ENCODE measurements at regions of chr1 and their contacts with region 1.

Region 1: GRCh38 chr1:162391790-162392563 is 10.4 kb downstream of the C1orf226 start:
- DNase-seq: no peak
- ATAC-seq: peak; percentile 43

Region 2: GRCh38 chr1:162056043-162056442 is 335.9 kb before region 1 on chr1:
- intact Hi-C with region 1: loop called (anchors 5 kb)
- DNase-seq: peak; percentile 77
- ATAC-seq: peak; percentile 95

Region 3: DNA sequence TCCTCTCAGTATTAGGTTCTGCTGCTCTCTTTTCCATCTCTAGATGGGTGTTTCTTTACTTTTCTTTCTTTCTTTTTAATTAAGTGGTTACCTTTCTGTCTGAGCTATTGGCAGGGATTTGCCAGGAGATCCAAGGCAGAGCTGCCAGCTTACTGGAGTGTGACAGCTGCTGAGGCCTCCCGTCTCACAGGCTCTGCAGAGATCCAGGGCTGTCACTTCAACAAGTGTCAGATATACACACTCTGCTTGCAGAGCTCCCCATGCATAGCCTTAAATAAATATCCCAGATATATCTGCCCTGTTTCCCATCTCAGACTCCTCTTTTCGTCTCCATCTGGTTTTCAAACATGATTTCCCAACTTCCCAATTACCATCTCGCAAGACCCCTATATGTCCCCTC is 198.2 kb before region 1 on chr1:
- intact Hi-C with region 1: no loop called
- DNase-seq: no peak
- ATAC-seq: no peak

Region 4: DNA sequence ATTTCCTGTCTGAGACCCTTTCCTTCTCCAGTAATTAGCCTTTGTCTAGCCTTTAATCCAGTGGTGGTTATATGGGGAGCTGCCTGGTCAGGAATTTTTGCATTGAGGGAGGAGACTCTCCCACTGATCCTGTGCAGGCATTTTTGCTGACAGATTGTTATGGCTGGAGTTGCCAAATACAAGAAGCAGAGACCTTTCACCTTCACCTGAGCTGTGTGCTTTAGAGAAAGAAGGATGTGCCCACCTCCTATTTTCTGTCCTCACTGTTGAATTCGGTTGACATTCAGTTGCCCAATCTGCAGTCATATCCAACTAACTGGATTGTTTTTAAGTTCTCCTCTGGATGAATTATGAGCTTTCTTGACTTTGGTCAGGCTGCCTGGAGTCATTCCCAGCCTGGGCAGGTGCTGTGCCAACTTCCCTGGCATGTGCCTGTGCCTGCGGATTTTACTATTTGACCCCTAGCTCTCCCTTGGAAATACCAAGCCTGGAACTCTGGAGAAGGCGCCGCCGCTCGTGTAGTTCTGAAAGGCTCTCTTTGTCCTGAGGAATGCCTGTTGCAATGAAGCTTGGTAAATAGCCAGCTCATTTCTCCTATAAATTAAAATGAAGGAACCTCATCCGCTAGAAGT is 178.6 kb before region 1 on chr1:
- intact Hi-C with region 1: no loop called
- DNase-seq: peak; percentile 76
- ATAC-seq: peak; percentile 89

Region 5: DNA sequence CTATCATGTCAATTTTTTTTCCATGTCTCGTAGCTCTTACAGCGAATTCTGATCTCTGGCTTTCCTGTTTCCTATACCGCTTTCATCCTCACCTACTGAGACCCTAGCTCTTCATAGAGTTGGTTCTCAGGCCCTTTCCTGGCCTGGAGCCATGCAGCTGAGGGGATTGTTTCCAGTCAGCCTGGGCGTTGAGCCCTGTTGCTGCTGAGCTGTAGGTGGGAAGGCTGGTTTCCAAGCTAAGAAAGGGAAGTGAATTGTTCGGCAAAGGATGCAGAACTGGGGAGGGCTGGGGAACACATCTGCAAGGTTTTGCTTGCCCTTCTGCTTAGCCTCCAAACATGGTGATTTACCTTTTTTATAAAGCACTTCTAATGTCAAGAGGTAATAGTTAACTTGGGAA is 56.9 kb before region 1 on chr1:
- intact Hi-C with region 1: loop called (anchors 2 kb)
- DNase-seq: no peak
- ATAC-seq: no peak

Region 6: DNA sequence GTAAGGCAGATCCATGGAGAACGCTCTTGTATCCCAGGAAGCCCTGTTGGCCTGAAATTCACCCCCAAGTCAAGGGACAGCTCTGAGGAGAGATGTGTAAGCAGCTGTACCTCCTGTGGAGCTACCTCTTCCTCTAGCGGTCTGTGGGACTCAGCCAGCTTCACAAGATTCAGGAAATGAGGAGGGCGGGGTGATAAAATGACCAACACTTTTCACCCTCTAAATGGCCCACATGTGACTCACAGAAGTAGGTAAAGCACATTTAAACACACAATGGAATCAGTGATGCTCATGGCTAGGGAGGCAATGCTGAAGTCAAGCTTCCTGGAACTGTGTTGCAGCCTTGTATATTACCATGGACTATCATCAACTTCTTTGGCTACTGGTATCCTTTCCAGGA is 20.0 kb after region 1 on chr1 and contains the start of gene SH2D1B:
- intact Hi-C with region 1: no loop called
- DNase-seq: no peak
- ATAC-seq: no peak
- total RNA-seq, gene SH2D1B: 0.53 TPM

Measured in sciatic nerve (tissue), 2 donors.